GM18951 (cell line): ENCODE measurements at regions of chr6 and their contacts with region 1.

Region 1: DNA sequence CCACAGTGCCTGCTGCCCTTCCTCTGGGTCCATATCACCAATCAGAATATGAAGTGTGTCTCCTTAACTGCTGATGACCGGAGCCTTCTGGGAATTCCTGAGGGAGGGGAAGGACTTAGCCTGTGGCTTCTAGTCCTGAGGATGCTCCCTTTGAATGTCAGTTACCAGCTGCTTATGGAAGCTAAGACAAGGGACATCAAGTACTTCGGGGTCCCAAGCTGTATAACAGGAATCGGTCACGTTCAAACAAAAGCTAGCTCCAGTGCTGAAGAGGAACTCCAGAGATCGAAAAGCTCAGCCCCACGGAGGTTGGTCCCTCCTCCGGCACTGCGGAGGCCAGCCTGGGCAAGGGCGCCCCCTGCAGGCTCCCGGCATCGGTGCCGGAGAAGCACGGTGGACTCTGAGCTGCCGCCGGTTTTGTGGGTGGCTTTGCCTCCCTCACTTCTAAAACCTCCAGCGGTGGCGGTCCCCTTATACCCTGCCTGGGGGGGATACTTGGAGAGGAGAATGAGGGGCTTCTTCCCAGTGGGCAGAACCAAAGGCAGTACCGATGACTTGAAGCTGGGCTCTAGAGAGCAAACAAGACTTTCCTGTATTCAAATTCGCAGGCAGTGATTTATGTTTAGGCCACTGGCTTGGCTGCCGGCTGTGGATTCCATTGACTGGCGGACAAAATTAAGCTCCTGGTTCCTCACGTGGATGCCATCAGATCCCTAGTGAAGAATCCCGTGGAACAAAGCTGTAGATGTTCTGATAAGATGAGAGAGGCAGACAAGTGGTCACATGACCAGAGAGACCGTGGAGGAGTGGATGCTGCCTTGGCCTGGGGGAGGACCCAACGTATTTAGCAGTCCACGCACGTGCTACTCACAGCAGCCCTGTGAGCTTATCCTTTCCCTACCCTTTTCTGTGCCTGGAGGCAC is 16.2 kb upstream of the UBR2 start:
- POLR2A ChIP-seq: no peak

Region 2: DNA sequence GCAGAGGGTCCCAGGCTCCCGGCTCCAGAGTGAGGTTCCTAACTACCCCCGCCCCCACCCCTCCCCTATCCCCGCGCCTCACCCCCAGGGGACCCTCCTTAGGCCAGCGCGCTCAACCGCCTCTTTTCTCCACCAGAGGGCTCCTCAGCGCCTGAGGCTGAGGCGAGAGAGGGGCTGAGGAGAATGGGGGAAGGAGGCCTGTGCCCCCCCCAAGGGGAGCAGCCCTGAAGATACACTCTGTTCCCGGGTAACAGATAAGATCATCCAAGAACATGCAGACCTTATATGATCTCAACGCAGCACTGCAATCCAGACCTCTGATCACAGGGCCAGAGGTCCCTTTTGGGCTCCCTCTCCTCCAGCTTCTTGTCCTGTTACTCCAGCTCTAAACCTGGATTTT is 286.7 kb before region 1 on chr6:
- in situ Hi-C with region 1: loop called (anchors 25 kb)
- POLR2A ChIP-seq: no peak